Activated CD4-positive, alpha-beta T cell treated with anti-CD3 and anti-CD28 coated beads, Interleukin-2, amount 10 ng/mL, durations not matched to agents 24 days and 14 days (primary cell): ENCODE measurements at regions of chr18 and their contacts with region 1.

Region 1: DNA sequence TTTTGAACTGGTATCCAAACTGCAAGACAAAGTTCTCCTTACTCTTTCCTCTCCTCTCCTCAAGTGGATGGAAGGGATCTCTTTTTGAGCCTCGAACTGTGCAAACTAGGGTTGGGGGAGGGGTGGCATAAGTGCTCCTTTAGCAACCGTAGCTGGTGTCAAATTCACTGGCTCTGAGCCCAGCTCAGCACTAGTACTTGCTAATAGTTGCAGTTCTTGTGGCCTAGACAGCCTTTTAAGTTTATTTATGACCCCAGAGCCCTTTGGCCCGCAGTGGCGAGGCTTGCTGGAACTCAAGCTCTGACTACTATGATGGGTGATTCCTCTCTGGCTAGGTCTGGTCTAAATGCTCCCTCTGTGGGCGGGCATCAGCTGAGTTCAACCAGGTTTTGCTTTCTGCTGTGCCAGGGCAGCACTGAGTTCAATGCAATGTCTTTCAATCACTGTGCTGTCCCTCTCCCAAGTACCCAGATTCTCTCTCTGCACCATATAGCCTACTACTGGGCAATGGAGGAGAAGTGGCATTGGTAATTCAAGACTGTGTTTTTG is 528.4 kb upstream of the SYT4 start:
- DNase-seq: no peak
- H3K4me3 Mint-ChIP-seq: no peak overlapping the region
- H3K27ac Mint-ChIP-seq: no peak overlapping the region
- H3K4me1 Mint-ChIP-seq: no peaks in the 10 kb centered on the region
- H3K27me3 Mint-ChIP-seq: no peaks in the 10 kb centered on the region

Region 2: DNA sequence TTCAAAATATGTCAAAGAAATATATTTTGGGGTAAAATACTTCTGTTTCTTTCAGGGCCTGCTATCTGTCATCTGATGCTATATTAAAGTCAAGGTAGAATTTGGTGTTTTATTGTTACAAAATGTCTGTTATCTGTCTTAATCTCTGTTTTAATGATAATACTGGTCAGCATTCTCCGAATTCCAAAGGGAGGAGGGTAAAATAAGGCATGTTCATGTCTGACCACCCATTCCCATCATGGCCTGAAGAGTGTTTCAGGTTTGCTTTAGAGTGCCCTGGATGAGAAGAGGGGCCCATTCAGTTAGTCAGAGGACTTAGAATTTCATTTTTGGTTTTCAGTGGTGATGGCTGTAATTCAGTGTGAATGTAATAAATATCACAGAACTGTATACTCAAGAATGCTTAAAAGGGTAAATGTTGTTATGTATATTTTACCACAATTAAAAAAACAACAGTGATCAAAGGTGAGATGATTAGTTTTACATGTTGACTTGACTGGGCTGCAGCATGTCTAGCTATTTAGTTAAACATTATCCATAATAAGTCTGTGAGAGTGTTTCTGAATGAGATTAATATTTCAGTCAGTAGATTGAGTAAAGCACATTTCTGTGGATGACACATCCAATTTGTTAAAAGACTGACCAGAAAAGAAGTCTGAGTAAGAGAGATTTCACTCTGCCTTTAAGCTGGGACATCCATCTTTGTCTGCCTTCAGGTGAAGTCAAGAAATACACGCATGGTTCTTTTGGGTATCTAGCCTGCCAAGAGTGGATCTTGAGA is 60.6 kb before region 1 on chr18:
- intact Hi-C with region 1: loop called (anchors 10 kb)
- DNase-seq: no peak
- H3K4me3 Mint-ChIP-seq: no peak overlapping the region
- H3K27ac Mint-ChIP-seq: no peak overlapping the region
- H3K4me1 Mint-ChIP-seq: no peaks in the 10 kb centered on the region
- H3K27me3 Mint-ChIP-seq: no peaks in the 10 kb centered on the region